Posterior cingulate gyrus (tissue), 11 donors: ENCODE measurements at regions of chr4 and their contacts with region 1.

Region 1: GRCh38 chr4:115090483-115091075 is 22.8 kb downstream of the NDST4 start:
- DNase-seq: no peak

Region 2: GRCh38 chr4:115537387-115537786 is 446.8 kb after region 1 on chr4:
- intact Hi-C with region 1: loop called (anchors 5 kb)
- DNase-seq: no peak